Endothelial cell of umbilical vein (primary cell): ENCODE measurements at regions of chr6 and their contacts with region 1.

Region 1: DNA sequence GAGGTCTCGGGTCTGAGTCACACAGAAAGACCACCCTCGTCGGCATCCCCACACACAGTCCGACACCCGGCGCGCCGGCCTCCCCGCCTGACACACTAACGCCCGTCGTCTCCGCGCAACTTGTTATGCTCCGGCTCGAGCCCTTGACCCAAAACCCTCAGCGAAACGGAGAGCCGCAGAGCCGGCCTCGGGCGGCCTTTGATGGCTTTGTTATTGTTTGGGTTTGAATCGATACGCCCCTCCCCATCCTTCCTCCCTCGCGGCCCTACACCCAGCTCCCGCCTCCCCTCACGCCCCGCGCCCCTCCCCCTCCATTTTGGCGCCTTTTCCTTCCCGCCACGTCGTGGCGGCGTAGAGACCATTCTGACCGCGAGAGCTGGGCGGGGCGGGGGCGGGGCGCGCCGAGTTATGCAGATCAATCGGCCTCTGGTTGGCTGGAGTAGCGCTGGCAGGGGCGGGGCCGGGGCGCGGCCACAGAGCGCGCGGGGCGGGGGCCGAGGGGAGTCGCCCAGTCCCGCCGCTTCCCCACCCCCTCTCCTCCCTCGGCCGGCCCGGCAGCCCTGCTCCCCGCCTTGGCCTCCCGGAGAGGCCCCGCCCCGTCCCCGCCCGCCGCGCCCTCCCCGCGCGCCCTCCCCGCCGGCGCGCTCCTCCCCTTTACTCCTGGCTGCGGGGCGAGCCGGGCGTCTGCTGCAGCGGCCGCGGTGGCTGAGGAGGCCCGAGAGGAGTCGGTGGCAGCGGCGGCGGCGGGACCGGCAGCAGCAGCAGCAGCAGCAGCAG is at the start of gene PIM1:
- DNase-seq: peak; percentile 97
- H3K4me3 ChIP-seq: peak within 1 kb of the TSS; percentile 61 to 95 (median 74)
- H3K27ac ChIP-seq: peak within 1 kb of the TSS; percentile 66
- H3K4me1 ChIP-seq: peaks cover 22% of the 10 kb centered on the region
- H3K27me3 ChIP-seq: no peaks in the 10 kb centered on the region
- CTCF ChIP-seq: no peak
- POLR2A ChIP-seq: peak; percentile 4
- total RNA-seq, gene PIM1: 10.5 and 11.3 TPM in 2 replicates

Region 2: GRCh38 chr6:35993150-35993549 is 1176.5 kb before region 1 on chr6:
- CTCF ChIA-PET with region 1: no interaction called
- POLR2A ChIA-PET with region 1: no interaction called
- dilution Hi-C with region 1: no loop called
- intact Hi-C with region 1: no loop called
- DNase-seq: no peak
- H3K4me3 ChIP-seq: no peak overlapping the region
- H3K27ac ChIP-seq: no peak overlapping the region
- H3K4me1 ChIP-seq: no peaks in the 10 kb centered on the region
- H3K27me3 ChIP-seq: no peaks in the 10 kb centered on the region
- CTCF ChIP-seq: no peak
- POLR2A ChIP-seq: no peak

Region 3: DNA sequence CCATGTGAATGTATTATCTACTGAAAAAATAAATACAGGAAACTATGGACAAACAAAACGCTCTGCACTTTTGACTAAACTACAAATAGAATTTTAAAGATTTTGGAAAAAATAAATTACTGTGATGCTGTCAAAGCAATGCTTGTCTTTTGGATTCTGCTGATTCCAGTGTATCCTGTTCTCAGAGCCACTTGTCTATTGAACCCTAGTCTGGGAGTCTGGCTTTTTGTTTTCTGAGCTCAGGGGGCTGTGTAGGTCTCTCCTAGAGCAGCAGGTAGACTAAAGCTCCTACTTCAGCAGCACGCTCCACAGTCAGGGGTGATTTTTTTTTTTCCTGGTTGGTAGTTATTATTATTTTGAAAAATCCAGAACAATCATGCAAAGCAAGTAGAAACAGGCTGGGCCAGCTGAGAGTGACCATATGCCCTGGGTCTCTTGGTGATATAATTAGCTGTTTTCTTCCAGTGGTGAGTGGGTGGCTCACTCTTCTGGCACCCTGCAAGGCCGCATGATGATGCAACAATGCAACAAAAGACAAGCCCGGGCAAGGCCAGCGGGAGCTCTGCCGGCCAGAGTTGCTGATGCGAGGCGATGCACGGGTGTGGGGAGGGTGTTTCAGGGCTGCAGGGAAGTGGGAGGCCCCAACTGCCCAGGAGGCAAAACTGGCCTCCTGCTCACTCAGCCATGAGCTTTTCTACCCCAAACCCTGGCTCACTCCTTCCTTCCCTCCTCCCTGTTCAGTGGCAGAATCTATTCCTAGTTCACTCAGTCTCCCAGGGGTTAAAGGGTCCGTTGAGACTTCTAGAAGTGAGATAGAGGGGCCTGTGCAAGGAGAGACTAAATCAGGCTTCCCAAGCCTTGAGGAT is 502.7 kb before region 1 on chr6:
- CTCF ChIA-PET with region 1: no interaction called
- POLR2A ChIA-PET with region 1: no interaction called
- dilution Hi-C with region 1: no loop called
- intact Hi-C with region 1: no loop called
- DNase-seq: peak; percentile 41
- H3K4me3 ChIP-seq: no peak overlapping the region
- H3K27ac ChIP-seq: no peak overlapping the region
- H3K4me1 ChIP-seq: no peaks in the 10 kb centered on the region
- H3K27me3 ChIP-seq: no peaks in the 10 kb centered on the region
- CTCF ChIP-seq: no peak
- POLR2A ChIP-seq: no peak

Region 4: DNA sequence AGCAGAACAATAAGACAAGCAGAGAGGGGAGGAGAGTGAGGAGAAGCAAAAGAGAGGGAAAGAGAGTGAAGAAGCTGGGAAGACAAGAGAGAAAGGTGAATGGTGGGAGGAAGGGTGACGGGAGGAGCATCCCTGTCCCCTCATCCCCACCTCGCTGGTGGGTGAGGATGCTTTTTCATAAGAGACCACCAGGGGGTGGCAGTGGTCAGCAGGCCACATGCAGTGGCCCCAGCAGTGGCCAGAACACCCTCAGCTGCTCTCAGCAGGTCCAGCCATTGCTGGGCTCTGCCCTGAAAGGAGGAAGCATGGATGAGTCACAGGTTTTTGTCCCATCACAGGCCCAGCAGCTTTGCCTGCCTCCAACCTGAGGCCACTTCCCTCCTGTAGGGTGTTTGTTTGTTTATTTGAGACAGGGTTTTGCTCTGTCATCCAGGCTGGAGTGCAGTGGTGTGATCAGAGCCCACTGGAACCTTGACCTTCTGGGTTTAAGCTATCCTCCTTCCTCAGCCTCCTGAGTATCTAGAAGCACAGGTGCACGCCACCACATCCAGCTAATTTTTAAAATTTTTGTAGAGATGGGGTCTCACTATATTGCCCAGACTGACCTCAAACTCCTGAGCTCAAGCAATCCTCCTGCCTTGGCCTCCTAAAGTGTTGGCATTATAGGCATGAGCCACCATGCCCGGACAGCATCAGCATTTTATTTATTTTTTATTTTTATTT is 140.3 kb before region 1 on chr6:
- CTCF ChIA-PET with region 1: interaction called, 120 read pairs
- POLR2A ChIA-PET with region 1: interaction called, 5 read pairs
- dilution Hi-C with region 1: no loop called
- intact Hi-C with region 1: loop called (anchors 1 kb)
- DNase-seq: peak; percentile 77
- H3K4me3 ChIP-seq: no peak overlapping the region
- H3K27ac ChIP-seq: no peak overlapping the region
- H3K4me1 ChIP-seq: no peaks in the 10 kb centered on the region
- H3K27me3 ChIP-seq: peaks cover 0 to 3% of the 10 kb centered on the region in 2 experiments
- CTCF ChIP-seq: peak; percentile 70 to 79
- POLR2A ChIP-seq: no peak

Region 5: GRCh38 chr6:37059344-37060206 is 110.1 kb before region 1 on chr6:
- CTCF ChIA-PET with region 1: interaction called, 399 read pairs
- POLR2A ChIA-PET with region 1: interaction called, 3 read pairs
- dilution Hi-C with region 1: no loop called
- intact Hi-C with region 1: loop called (anchors 1 kb)
- DNase-seq: peak; percentile 77
- H3K4me3 ChIP-seq: no peak overlapping the region
- H3K27ac ChIP-seq: peak overlapping the region; percentile 69
- H3K4me1 ChIP-seq: peaks cover 9% of the 10 kb centered on the region
- H3K27me3 ChIP-seq: no peaks in the 10 kb centered on the region
- CTCF ChIP-seq: peak; percentile 53 to 60
- POLR2A ChIP-seq: no peak

Region 6: DNA sequence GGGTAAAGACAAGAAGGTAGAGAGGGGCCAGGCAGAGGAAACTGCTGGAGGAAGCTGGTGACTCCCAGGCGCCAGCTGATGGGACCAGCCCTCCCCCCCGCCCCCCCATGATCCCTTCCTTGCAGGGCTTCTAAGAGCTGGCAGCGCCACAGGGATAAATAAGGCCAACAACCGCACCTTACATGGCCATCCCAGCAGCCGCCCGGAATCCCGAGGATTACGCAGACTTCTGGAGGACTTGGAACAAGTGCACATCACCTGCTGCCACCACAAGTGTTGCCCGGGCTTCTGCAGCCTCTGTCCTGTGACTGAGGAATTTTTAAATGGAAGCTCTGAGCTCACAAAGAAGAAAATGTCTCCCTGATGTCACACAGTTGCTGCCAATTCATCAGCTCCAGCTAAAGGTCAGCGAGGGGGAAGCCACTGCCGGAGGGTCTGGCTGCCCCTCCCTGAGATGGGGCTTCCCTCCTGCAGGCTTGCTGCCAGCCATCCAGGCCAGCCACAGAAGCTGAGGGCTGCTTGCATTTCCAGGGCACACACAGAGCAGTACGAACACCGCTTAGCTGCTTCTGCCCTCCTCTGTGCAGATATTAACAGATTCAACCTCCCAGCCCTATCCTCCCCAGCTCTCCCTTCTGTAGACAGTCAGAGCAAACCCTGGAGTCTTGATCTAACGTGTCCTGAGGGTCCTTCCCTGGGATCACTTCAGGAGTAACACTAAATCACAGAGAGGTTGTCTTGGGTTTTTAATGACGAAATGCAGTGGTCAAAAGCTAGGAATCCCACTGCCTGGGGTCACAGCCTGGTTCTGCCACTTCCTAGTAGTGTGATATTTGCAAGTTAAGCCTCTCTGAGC is 38.4 kb before region 1 on chr6:
- CTCF ChIA-PET with region 1: interaction called, 15 read pairs
- POLR2A ChIA-PET with region 1: interaction called, 5 read pairs
- dilution Hi-C with region 1: no loop called
- intact Hi-C with region 1: no loop called
- DNase-seq: peak; percentile 52
- H3K4me3 ChIP-seq: no peak overlapping the region
- H3K27ac ChIP-seq: peak overlapping the region; percentile 14
- H3K4me1 ChIP-seq: peaks cover 44% of the 10 kb centered on the region
- H3K27me3 ChIP-seq: no peaks in the 10 kb centered on the region
- CTCF ChIP-seq: no peak
- POLR2A ChIP-seq: no peak

Region 7: DNA sequence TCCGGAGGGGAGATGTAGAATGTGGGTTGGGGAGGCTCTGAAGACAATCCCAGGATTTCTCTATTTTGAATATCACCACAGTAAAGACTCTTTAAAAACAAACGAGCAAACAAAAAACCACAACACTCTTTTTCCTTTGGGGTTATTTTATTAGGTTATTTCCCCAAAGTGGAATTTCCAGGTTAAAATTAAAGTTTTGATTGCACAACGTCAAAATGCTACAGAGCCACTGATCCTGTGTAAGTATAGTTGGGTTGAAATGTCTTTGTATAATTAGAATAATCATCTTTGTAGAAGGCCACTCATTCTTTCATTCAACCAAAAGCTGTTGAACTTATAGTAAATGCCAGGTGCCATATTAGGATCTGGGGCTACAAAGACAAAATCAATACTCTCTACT is 19.4 kb before region 1 on chr6:
- CTCF ChIA-PET with region 1: no interaction called
- POLR2A ChIA-PET with region 1: no interaction called
- dilution Hi-C with region 1: no loop called
- intact Hi-C with region 1: no loop called
- DNase-seq: no peak
- H3K4me3 ChIP-seq: no peak overlapping the region
- H3K27ac ChIP-seq: no peak overlapping the region
- H3K4me1 ChIP-seq: no peaks in the 10 kb centered on the region
- H3K27me3 ChIP-seq: peaks cover 6 to 17% of the 10 kb centered on the region in 2 experiments
- CTCF ChIP-seq: no peak
- POLR2A ChIP-seq: no peak

Region 8: DNA sequence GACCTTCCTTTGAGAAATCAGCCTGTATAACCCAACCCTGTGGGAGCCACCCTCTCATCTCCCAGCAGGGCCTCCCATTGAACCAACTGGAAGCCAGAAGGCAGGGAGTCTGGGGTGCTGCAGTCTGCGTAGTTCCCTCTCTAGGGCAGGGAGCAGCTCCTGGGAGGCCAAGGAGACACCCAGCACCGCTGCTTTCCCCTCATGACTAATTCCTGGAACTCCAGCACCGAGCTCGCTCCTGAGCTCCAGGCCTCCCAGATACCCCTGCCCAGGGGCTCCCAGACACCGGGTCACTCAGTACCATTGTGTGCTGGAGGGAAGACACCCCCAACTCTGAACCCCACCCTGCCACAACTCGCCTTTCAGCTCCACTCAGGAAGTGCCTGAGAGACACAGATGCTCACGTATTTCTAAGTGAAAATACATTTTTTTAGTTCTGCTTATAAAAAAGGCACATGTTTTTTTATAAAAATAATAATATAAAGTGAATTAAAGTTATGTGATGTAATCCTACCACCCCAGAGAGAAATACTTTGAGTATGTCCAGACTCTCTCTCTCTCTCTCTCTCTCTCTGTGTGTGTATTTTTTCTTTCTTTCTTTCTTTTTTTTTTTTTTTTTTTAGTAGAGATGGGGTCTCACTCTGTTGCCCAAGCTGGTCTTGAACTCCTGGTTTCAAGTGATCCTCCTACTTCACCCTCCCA is 17.8 kb after region 1 on chr6:
- CTCF ChIA-PET with region 1: interaction called, 12 read pairs
- POLR2A ChIA-PET with region 1: no interaction called
- dilution Hi-C with region 1: no loop called
- intact Hi-C with region 1: no loop called
- DNase-seq: no peak
- H3K4me3 ChIP-seq: no peak overlapping the region
- H3K27ac ChIP-seq: no peak overlapping the region
- H3K4me1 ChIP-seq: no peaks in the 10 kb centered on the region
- H3K27me3 ChIP-seq: peaks cover 0 to 4% of the 10 kb centered on the region in 2 experiments
- CTCF ChIP-seq: no peak
- POLR2A ChIP-seq: no peak

Region 9: DNA sequence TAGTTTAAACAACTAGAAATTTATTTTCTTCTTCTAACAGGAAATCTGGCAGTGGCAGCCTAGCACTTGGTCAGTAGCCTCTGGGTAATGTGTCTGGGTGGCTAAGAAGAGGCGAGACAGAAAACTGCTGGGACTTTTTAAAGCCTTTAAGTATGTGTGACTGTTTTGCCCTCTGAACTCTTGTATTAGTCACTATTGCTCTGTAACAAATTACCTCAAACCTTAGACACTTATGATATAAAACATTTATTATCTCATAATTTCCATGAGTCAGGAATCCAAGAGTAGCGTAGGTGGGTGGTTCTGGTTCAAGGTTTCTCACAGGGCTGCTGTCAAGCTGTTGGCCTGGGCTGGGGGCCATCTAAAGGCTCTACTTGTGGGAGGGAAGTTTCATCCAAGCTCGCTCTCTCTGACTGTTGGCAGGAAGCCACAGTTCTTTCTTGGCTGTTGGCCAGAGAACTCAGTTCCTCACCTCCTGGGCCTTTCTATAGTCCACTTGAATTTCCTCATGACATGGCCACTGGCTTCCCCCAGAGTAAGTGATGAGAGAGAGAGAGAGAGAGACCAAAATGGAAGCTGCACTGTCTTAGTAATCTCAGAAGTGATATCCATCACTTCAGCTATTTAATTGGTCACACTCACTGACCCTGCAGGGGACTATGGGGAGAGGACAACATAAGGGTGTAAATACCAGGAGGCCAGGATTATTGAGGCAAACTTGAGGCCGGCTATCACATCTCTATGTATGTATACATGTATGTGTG is 70.4 kb after region 1 on chr6:
- CTCF ChIA-PET with region 1: interaction called, 3 read pairs
- POLR2A ChIA-PET with region 1: interaction called, 3 read pairs
- dilution Hi-C with region 1: no loop called
- intact Hi-C with region 1: loop called (anchors 1 kb)
- DNase-seq: peak; percentile 99
- H3K4me3 ChIP-seq: no peak overlapping the region
- H3K27ac ChIP-seq: peak overlapping the region; percentile 99
- H3K4me1 ChIP-seq: peaks cover 67% of the 10 kb centered on the region
- H3K27me3 ChIP-seq: no peaks in the 10 kb centered on the region
- CTCF ChIP-seq: no peak
- POLR2A ChIP-seq: no peak

Region 10: DNA sequence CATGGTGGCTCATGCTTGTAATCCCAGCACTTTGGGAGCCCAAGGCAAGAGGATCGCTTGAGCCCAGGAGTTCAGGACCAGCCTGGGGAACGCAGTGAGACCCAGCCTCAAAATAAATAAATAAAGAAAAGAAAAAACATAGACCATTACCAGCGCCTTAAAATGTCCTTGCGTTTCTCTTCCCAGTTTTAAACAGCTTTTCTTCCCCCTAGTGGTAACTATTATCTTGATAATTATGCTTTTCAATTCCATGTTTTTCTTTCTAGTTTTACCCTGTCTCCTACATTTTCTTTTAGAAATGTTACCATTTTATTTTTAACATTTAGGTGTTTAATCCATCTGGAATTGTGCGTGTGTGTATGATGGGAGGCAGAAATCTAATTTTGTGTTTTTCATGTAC is 1569.8 kb after region 1 on chr6:
- CTCF ChIA-PET with region 1: no interaction called
- POLR2A ChIA-PET with region 1: no interaction called
- dilution Hi-C with region 1: no loop called
- intact Hi-C with region 1: no loop called
- DNase-seq: peak; percentile 15
- H3K4me3 ChIP-seq: no peak overlapping the region
- H3K27ac ChIP-seq: no peak overlapping the region
- H3K4me1 ChIP-seq: no peaks in the 10 kb centered on the region
- H3K27me3 ChIP-seq: peaks cover 0 to 2% of the 10 kb centered on the region in 2 experiments
- CTCF ChIP-seq: peak; percentile 6 to 27
- POLR2A ChIP-seq: no peak